Transverse colon (tissue), 4 donors: ENCODE measurements at regions of chr15 and their contacts with region 1.

Region 1: GRCh38 chr15:48928877-48929538 is 34.7 kb downstream of the SHC4 start:
- DNase-seq: no peak
- H3K4me3 ChIP-seq: no peak overlapping the region
- H3K27ac ChIP-seq: no peak overlapping the region
- H3K4me1 ChIP-seq: peaks cover 0 to 4% (median 0%) of the 10 kb centered on the region in 4 donors
- H3K27me3 ChIP-seq: no peaks in the 10 kb centered on the region
- CTCF ChIP-seq: no peak
- EP300 ChIP-seq: no peak
- POLR2A ChIP-seq: no peak

Region 2: DNA sequence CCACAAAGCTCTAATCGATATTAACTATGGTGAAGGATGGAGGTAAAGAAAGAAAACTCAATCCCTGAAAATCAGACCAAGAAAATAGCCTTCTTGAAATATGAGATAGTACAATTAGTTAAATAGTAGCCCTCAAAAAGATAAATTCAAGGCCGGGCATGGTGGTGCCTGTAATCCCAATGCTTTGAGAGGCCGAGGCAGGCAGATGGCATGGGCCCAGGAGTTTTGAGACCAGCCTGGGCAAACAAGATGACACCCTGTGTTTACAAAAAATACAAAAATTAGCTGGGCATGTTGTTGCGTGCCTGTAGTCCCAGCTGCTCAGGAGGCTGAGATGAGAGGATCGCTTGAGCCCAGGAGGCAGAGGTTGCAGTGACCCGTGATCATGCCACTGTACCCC is 86.5 kb before region 1 on chr15:
- in situ Hi-C with region 1: no loop called
- intact Hi-C with region 1: loop called (anchors 1 kb)
- DNase-seq: no peak
- H3K4me3 ChIP-seq: no peak overlapping the region
- H3K27ac ChIP-seq: no peak overlapping the region
- H3K4me1 ChIP-seq: no peaks in the 10 kb centered on the region
- H3K27me3 ChIP-seq: no peaks in the 10 kb centered on the region
- CTCF ChIP-seq: no peak
- EP300 ChIP-seq: no peak
- POLR2A ChIP-seq: no peak

Region 3: DNA sequence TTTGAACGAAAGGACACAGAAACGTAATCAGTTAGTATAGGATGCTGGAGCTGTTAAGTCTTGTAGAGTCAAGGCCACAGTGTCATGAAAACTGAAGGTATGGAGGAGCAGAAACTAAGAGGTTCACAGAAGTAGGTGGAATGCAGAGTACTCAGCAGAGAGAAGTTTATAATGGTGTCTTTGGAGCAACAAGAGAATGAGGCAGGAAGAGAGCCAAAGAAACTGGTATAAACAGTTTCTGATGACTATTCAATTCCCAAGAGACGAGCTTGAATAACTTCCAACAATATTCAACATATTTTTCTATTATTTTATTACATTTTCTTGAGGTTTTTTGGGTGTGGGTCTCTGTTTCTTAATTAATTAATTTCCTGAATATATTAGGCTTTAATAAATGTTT is 270.7 kb after region 1 on chr15:
- in situ Hi-C with region 1: no loop called
- intact Hi-C with region 1: no loop called
- DNase-seq: no peak
- H3K4me3 ChIP-seq: no peak overlapping the region
- H3K27ac ChIP-seq: no peak overlapping the region
- H3K4me1 ChIP-seq: peaks cover 0 to 13% (median 0%) of the 10 kb centered on the region in 4 donors
- H3K27me3 ChIP-seq: no peaks in the 10 kb centered on the region
- CTCF ChIP-seq: no peak
- EP300 ChIP-seq: no peak
- POLR2A ChIP-seq: no peak